AG04450 (cell line): ENCODE measurements at regions of chr1 and their contacts with region 1.

Region 1: GRCh38 chr1:181189691-181190363 is 101.3 kb downstream of the IER5 start:
- DNase-seq: no peak
- H3K4me3 ChIP-seq: peak overlapping the region; percentile 36; the same call in 1 of the 2 replicates
- H3K27ac ChIP-seq: no peak overlapping the region
- H3K27me3 ChIP-seq: peaks cover 17% of the 10 kb centered on the region
- CTCF ChIP-seq: peak; percentile 95

Region 2: DNA sequence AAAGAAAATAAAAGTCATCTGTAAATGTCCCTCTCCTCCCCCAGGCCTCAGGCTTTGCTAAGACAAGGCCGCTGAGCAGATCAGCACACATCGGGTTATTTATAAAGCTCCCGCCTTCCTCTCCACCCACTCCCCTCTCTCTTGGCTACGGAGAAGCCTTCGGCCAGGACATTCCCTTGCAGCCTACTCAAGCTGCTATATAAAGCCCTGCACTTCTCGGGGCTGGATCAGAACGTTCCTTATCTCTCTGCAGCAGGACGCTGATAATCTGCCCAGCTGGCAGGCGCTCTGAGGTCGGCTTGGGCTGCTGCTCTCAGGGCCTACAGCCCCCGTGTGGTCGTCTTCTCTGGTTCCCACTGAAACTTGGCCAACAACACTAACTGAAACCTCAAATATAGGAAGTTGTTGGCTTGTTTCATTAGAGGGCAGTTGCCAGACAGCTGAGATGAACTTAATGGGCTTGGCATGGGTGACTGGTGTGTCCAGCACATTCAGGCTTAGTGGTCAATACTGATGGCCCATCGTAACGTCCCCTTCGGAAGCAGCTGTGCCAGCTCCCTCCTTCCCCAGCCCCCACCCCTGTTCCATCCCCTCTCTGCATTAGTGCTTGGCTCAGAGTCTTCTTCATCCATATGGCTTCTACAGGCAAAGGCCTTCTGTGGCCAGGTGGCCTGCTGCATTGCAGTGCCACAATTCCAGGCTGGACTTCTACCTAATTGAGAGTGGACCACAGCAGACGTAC is 36.8 kb before region 1 on chr1:
- CTCF ChIA-PET with region 1: no interaction called
- POLR2A ChIA-PET with region 1: no interaction called
- DNase-seq: peak; percentile 78
- H3K4me3 ChIP-seq: no peak overlapping the region; the same call in 1 of the 2 replicates
- H3K27ac ChIP-seq: peak overlapping the region; percentile 62
- H3K27me3 ChIP-seq: no peaks in the 10 kb centered on the region
- CTCF ChIP-seq: peak; percentile 53

Region 3: GRCh38 chr1:181424786-181425403 is 235.1 kb after region 1 on chr1:
- CTCF ChIA-PET with region 1: interaction called, 106 read pairs
- POLR2A ChIA-PET with region 1: no interaction called
- DNase-seq: peak; percentile 29
- H3K4me3 ChIP-seq: no peak overlapping the region
- H3K27ac ChIP-seq: no peak overlapping the region
- H3K27me3 ChIP-seq: peaks cover 3% of the 10 kb centered on the region
- CTCF ChIP-seq: peak; percentile 97

Region 4: DNA sequence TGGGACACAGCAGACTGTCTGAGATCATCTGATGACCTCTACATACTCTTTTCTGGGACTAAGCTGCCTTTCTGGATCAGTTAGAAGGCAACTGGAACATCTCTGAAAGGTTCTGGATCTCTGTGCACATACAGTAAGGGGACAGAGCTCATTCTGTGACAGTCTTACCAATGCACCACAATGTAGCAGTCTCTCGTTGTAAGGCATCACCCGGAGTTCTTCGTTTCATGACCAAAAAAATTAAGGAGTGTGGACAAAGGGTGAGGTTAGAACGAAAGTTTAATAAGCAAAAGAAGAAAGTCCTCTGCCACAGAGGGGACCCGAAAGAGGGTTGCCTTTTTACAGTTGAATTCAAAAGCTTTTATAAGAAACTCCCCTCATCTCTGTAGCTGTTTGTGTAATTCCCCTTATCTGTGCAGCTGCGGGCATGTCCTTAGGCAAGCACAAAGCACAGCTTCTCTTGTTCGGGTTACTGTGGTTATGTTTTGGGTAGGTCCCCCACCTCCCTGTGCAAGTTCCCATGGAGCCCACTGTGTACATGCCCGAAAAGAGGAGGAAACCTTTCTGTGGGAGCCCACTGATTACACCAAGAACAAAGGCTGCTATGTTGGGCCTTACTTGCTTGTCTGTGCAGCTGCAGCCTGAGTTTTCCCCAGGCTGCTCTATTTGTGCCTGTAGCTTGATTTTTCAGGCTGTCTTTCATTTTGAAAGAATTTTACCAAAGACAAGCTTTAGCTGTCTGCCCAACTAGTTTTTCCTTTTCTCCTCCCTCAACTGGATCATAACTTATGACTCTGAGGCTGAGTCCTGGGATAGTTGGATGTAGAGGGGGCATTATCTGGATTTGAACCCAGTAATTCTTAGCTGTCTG is 240.4 kb after region 1 on chr1:
- CTCF ChIA-PET with region 1: interaction called, 106 read pairs
- POLR2A ChIA-PET with region 1: no interaction called
- DNase-seq: no peak
- H3K4me3 ChIP-seq: no peak overlapping the region
- H3K27ac ChIP-seq: no peak overlapping the region
- H3K27me3 ChIP-seq: peaks cover 3% of the 10 kb centered on the region
- CTCF ChIP-seq: no peak